ENCODE measurements at regions of chr9 and their contacts with region 1.

Region 1: DNA sequence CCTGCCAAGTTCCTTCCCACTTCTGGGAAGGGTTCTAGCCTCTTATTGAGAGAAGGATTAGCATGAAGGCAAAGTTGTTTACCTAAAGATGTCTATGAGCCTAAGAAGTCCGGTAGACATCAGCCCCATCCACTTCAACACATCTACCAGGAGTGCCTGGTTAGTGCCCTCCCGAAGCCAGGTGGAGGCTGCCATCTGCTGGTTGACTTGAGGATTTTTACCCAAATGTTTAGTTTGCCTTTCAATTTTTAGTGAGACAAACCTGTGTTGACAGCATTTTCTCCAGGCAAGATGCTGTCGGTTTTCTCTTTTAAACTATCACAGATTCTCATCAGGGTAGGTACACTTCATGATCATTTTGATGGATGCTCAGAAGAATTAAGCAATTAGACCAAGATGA is 83.6 kb upstream of the TNFSF8 start:
- DNase-seq: peak; percentile 57
- H3K4me3 ChIP-seq: no peak overlapping the region
- H3K27ac ChIP-seq: no peak overlapping the region
- H3K4me1 ChIP-seq: peaks cover under 1% of the 10 kb centered on the region
- H3K27me3 ChIP-seq: no peaks in the 10 kb centered on the region
- CTCF ChIP-seq: peak; percentile 74 to 83

Region 2: DNA sequence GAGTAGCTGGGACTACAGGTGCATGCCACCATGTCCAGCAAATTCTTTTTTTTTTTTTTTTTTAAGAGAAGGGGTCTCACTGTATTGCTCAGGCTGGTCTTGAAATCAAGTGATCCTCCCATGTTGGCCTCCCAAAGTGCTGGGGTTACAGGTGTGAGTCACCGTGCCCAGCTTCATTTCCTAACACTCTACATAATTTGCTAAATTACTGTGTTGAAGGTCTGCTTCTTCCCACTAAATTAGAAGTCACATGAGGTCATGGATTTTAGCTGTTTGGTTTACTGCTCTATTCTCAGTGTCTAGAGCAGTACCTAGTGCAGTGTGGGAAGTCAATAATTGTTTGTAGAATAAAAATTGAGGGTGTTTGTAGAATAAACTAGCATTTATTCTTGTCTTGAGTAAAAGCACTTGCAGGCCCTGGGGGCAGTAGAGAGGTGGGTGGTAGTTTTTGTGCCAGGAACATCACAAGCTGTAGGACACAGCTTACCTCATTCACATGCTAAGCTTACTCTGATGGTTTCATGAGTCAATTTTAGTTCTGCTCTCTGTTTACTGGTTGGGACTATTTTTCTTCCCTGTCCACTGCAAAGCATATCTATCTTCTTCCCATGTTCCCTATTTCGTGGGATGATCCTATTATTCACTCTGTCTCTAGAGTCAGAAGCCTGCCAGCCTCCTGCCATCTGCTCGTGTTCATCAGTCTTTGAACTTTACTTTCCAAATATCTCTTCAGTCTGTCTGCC is 339.0 kb before region 1 on chr9:
- CTCF ChIA-PET with region 1: interaction called, 3 read pairs
- dilution Hi-C with region 1: no loop called
- in situ Hi-C with region 1: loop called (anchors 5 kb)
- intact Hi-C with region 1: no loop called
- DNase-seq: peak; percentile 43
- H3K4me3 ChIP-seq: no peak overlapping the region
- H3K27ac ChIP-seq: peak overlapping the region; percentile 5
- H3K4me1 ChIP-seq: peaks cover 39% of the 10 kb centered on the region
- H3K27me3 ChIP-seq: no peaks in the 10 kb centered on the region
- CTCF ChIP-seq: no peak

Region 3: DNA sequence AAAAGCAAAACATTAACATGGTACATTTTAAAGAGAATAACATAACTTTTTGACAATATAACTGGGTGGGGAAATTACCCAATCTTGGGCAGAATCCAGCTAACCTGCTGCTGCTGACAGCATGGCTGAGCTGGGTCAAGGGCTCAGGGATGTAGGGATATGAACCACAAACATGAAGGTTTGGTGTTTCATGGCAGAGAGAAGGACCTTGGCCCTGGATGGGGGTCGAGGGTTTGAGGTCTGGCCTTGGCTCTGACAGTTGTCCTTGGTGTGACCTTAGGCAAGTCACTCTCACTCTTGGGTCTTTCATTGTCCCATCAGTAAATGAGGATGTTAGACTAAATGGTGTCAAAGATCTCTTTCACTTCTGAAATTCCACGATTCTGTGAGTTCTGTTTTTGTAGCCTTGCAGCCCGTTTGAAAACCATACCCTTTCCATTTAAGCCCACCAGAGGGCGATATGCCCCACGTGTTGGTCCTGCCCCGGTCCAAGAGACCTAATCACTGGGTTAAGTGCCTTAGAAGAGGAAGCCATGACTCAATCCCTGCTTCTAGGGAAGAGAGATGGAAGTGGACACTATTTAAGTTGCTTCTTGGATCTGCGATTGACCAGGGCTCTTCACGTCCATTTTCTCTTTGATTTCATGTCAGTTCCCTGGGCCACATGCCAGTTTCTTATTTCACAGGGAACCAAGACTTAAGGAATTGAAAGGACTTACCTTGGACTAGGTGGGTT is 275.2 kb before region 1 on chr9:
- CTCF ChIA-PET with region 1: no interaction called
- dilution Hi-C with region 1: no loop called
- in situ Hi-C with region 1: loop called (anchors 5 kb)
- intact Hi-C with region 1: loop called (anchors 1 kb)
- DNase-seq: peak; percentile 78
- H3K4me3 ChIP-seq: no peak overlapping the region
- H3K27ac ChIP-seq: no peak overlapping the region
- H3K4me1 ChIP-seq: peaks cover 5% of the 10 kb centered on the region
- H3K27me3 ChIP-seq: no peaks in the 10 kb centered on the region
- CTCF ChIP-seq: peak; percentile 71 to 81

Region 4: DNA sequence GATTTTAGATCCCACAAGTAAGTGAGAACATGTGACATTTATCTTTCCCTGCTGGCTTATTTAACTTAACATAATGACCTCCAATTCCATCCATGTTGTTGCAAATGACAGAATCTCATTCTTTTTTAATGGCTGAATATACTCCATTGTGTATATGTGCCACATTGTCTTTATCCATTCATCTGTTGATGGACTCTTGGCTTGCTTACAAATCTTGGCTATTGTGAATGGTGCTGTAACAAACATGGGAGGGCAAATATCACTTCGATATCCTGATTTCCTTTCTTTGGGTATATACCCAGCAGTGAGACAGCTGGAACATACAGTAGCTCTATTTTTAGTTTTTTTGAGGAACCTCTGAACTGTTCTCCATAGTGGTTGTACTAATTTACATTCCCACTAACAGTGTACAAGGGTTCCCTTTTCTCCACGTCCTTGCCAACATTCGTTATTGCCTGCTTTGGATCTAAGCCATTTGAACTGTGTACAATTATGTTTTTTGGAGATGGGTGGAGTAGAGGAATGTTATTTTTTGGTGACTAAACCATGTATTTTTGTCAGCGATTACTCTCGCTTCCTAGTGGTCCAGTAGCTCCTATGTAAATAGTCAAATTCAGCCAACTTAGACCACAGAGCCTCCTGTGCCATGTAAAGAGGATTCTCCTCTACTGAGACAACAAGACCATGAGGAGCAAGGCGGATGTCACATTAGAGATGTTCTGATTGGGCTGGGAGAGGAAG is 268.7 kb before region 1 on chr9:
- CTCF ChIA-PET with region 1: no interaction called
- dilution Hi-C with region 1: no loop called
- in situ Hi-C with region 1: loop called in 1 of 2 experiments (anchors 5 kb)
- intact Hi-C with region 1: no loop called
- DNase-seq: no peak
- H3K4me3 ChIP-seq: no peak overlapping the region
- H3K27ac ChIP-seq: no peak overlapping the region
- H3K4me1 ChIP-seq: no peaks in the 10 kb centered on the region
- H3K27me3 ChIP-seq: no peaks in the 10 kb centered on the region
- CTCF ChIP-seq: no peak

Region 5: DNA sequence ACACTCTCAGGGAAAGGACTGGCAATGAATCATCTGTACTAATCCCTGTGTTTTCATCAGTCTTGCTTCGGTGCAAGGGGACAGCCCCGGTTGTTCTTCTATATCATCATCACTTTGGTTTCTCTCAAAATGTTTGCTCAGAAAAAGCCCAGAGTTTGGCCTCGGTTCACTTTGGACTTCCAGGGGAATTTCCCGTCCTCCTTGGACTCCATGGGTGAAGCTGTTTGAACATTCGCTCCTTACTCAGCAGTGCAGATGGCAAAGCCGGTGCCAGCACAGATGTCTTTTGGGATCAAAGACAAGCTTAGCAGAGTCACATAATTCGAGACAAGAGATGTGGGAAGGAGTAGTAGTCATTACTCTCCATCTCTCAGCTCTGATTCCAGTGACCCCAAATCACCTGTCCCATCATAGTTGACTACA is 13.8 kb before region 1 on chr9:
- CTCF ChIA-PET with region 1: no interaction called
- dilution Hi-C with region 1: no loop called
- in situ Hi-C with region 1: no loop called
- intact Hi-C with region 1: no loop called
- DNase-seq: no peak
- H3K4me3 ChIP-seq: no peak overlapping the region
- H3K27ac ChIP-seq: no peak overlapping the region
- H3K4me1 ChIP-seq: no peaks in the 10 kb centered on the region
- H3K27me3 ChIP-seq: no peaks in the 10 kb centered on the region
- CTCF ChIP-seq: no peak

Region 6: DNA sequence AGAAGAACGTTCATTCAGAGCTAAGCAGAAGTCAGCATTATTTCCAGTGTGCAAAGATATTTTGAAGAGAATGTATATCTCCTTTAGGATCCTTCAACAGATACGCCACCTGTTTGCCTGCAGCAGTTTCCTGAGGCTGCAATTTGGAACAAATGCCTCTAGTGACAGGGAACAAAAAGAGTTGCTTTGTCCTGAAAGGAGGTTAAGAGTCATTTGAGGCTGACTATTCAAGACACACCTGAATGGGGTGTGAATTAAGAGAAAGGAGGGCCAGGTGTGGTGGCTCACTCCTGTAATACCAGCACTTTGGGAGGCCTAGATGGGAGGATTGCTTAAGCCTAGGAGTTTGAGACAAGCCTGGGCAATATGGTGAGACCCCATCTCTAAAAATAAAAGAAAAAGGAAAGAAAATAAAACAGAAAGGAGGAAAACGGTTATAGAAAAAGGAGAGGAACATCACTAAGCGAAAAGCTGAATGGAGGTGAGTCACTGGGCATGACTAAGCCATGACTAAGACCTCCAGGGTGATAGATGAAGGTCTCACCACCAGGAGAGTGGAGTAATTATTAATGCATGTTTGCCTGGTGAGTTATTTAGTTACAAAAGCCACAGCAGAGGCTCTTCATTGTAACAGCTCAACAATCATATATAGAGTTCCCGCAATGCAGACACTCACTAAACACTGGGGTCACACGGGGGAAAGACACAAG is 359.2 kb after region 1 on chr9:
- CTCF ChIA-PET with region 1: no interaction called
- dilution Hi-C with region 1: no loop called
- in situ Hi-C with region 1: no loop called
- intact Hi-C with region 1: loop called (anchors 5 kb)
- DNase-seq: peak; percentile 97
- H3K4me3 ChIP-seq: peak overlapping the region in 1 of 3 experiments; percentile 8
- H3K27ac ChIP-seq: peak overlapping the region; percentile 90
- H3K4me1 ChIP-seq: peaks cover 36% of the 10 kb centered on the region
- H3K27me3 ChIP-seq: no peaks in the 10 kb centered on the region
- CTCF ChIP-seq: peak in 1 of 2 donors; percentile 29

Measured in mammary epithelial cell (primary cell).